ENCODE measurements at regions of chr1 and their contacts with region 1.

Region 1: DNA sequence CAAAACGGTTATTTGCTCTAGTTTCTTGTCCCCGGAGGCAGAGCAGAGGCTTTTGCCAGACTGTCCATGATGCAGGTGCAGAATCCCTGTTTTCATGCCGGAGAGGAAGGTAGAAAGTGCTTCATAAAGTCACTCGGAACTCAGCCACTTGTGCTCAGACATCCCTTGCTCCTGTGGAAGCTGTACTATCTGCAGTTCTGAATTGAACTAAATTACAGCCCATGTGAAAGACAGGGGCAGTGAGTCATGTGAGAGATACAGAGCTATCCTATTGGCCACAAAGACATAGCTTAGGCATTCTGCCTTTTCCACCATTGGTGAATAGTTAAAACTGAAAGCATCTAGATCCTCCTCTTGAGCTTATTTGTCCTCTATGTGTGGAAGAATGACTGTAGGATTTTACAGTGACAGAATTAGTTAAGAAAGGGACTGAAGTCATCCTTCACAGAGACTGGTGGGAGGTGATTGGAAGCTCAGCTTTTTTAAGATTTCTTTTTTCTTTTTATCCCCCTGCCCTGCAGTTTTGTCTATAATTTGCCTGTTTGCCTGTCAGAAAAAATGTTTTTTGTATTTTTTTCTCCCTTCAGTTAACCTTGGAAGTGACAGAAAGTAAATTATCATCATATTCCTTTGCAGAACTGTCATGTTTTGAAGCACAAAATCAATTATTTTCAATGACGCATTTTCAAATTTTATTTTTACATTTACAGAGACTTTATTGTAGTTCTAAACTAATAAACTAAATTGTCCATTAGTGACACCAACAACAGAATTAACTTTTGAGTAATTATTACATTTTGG is 298.6 kb downstream of the PTPRC start:
- DNase-seq: peak; percentile 53 to 81
- ATAC-seq: peak; percentile 77 to 92 (median 87)
- H3K4me3 ChIP-seq: peak overlapping the region; percentile 53
- H3K4me3 Mint-ChIP-seq: no peak overlapping the region
- H3K27ac ChIP-seq: peak overlapping the region; percentile 53
- H3K27ac Mint-ChIP-seq: no peak overlapping the region
- H3K4me1 ChIP-seq: peaks cover 4% of the 10 kb centered on the region
- H3K4me1 Mint-ChIP-seq: peaks cover 12 to 21% of the 10 kb centered on the region in 2 donors
- H3K27me3 ChIP-seq: no peaks in the 10 kb centered on the region
- H3K27me3 Mint-ChIP-seq: no peaks in the 10 kb centered on the region
- CTCF ChIP-seq: no peak

Region 2: GRCh38 chr1:198408716-198409115 is 528.7 kb before region 1 on chr1:
- intact Hi-C with region 1: no loop called
- DNase-seq: no peak
- ATAC-seq: no peak
- H3K4me3 ChIP-seq: no peak overlapping the region
- H3K4me3 Mint-ChIP-seq: no peak overlapping the region
- H3K27ac ChIP-seq: no peak overlapping the region
- H3K27ac Mint-ChIP-seq: no peak overlapping the region
- H3K4me1 ChIP-seq: no peaks in the 10 kb centered on the region
- H3K4me1 Mint-ChIP-seq: no peaks in the 10 kb centered on the region
- H3K27me3 ChIP-seq: no peaks in the 10 kb centered on the region
- H3K27me3 Mint-ChIP-seq: peaks cover 0 to under 1% of the 10 kb centered on the region in 2 donors
- CTCF ChIP-seq: no peak

Region 3: DNA sequence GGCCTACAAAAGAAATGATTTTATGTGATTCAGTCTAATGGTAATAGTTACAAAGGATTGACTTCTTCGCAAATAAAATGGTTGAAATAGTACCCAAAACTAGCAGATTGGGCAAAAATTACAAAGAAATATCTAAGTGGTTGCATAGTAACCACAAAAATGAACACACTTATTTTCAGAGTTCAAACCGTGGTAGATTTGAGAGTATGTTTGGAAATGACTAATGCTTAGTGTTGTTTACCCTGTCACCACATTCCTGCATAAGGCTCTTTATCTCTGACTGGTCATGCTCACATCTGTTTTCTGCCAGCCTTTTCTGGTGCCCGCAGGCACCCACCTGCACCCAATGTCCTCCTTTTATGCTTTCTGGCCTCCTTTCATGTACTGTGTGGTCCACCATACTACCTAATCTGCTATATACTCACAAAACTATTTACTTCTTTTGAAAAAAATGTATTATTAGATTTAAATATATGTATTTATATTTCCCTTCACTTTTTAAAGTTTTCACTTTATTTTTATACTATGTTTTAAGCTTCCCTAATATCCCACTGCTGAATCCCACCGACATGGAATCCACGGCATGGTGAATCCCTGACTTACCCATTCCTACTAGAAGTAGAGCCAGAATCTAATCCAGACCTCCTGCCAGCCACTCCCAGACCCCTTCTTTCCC is 268.3 kb before region 1 on chr1:
- intact Hi-C with region 1: loop called (anchors 10 kb)
- DNase-seq: peak; percentile 55 to 78
- ATAC-seq: peak; percentile 81 to 89 (median 87)
- H3K4me3 ChIP-seq: no peak overlapping the region
- H3K4me3 Mint-ChIP-seq: peak overlapping the region; percentile 70
- H3K27ac ChIP-seq: peak overlapping the region; percentile 86
- H3K27ac Mint-ChIP-seq: peak overlapping the region; percentile 88 to 90
- H3K4me1 ChIP-seq: peaks cover 35% of the 10 kb centered on the region
- H3K4me1 Mint-ChIP-seq: peaks cover 82 to 83% of the 10 kb centered on the region in 2 donors
- H3K27me3 ChIP-seq: no peaks in the 10 kb centered on the region
- H3K27me3 Mint-ChIP-seq: no peaks in the 10 kb centered on the region
- CTCF ChIP-seq: no peak

Region 4: DNA sequence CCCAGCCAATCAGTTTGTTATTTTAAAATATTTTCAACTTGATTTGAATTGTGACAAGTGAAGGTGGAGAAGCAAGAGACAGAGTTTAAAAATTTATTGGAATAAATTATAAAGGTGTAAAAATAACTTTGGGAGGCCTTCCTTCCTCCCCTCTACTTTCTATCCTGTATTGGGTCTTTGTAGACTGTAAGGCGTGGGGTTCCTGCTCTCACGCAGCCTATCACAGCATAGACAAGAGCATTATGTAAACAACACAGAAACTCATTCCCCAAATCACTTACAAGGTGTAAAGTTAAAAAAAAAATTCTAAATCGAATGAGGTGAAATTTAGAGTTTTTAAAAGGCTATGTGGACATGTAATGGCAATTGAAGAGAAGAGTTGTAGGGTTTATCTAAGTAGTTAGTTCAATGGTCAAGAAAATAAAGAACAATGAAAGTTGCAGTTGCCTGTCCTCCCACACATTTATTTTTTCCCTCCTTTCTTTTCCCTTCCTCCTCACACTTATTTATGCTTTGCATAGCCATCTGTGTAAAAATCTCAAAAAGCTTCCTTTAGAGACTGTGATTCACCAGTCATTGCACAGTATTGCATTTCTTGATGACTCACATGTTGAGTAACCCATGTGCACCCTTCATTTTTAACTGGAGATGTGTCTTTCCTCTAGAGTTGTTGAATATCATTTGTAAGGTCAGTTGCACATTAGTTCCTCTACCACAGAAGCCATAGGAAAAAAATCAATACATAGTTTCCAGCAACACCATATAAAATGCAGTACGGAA is 56.4 kb before region 1 on chr1:
- intact Hi-C with region 1: loop called (anchors 10 kb)
- DNase-seq: no peak
- ATAC-seq: peak; percentile 48 to 82 (median 54)
- H3K4me3 ChIP-seq: no peak overlapping the region
- H3K4me3 Mint-ChIP-seq: no peak overlapping the region
- H3K27ac ChIP-seq: no peak overlapping the region
- H3K27ac Mint-ChIP-seq: peak overlapping the region; percentile 34 to 64
- H3K4me1 ChIP-seq: no peaks in the 10 kb centered on the region
- H3K4me1 Mint-ChIP-seq: peaks cover 33 to 44% of the 10 kb centered on the region in 2 donors
- H3K27me3 ChIP-seq: no peaks in the 10 kb centered on the region
- H3K27me3 Mint-ChIP-seq: no peaks in the 10 kb centered on the region
- CTCF ChIP-seq: no peak

Region 5: GRCh38 chr1:198919667-198920398 is 17.6 kb before region 1 on chr1:
- intact Hi-C with region 1: loop called (anchors 1 kb)
- DNase-seq: peak in 1 of 2 donors; percentile 49
- ATAC-seq: peak; percentile 70 to 80 (median 71)
- H3K4me3 ChIP-seq: no peak overlapping the region
- H3K4me3 Mint-ChIP-seq: peak overlapping the region; percentile 85
- H3K27ac ChIP-seq: peak overlapping the region; percentile 66
- H3K27ac Mint-ChIP-seq: peak overlapping the region; percentile 91 to 92
- H3K4me1 ChIP-seq: peaks cover 12% of the 10 kb centered on the region
- H3K4me1 Mint-ChIP-seq: peaks cover 77 to 79% of the 10 kb centered on the region in 2 donors
- H3K27me3 ChIP-seq: no peaks in the 10 kb centered on the region
- H3K27me3 Mint-ChIP-seq: no peaks in the 10 kb centered on the region
- CTCF ChIP-seq: no peak

Region 6: DNA sequence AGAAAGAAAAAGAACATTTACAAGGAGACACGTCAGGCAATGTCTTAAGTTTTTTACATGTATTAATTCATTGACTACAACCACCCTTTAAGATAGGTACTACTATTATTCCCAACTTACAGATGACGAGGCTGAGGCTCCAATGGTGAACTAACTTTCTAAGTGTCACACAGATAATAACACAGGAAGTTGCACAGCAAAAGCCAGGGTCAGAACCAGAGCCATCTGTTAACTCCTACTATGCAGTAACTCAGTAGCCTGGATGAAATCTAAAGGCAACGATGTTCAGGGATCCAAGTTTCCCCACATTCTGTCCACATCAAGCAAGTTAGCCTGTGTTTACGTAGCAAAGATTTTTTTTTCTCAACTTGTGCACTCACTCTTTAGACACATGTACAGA is 73.1 kb after region 1 on chr1:
- intact Hi-C with region 1: loop called (anchors 5 kb)
- DNase-seq: peak in 1 of 2 donors; percentile 51
- ATAC-seq: peak; percentile 90 to 96 (median 96)
- H3K4me3 ChIP-seq: no peak overlapping the region
- H3K4me3 Mint-ChIP-seq: peak overlapping the region; percentile 79
- H3K27ac ChIP-seq: no peak overlapping the region
- H3K27ac Mint-ChIP-seq: peak overlapping the region; percentile 49 to 79
- H3K4me1 ChIP-seq: peaks cover 14% of the 10 kb centered on the region
- H3K4me1 Mint-ChIP-seq: peaks cover 31 to 37% of the 10 kb centered on the region in 2 donors
- H3K27me3 ChIP-seq: peaks cover 4% of the 10 kb centered on the region
- H3K27me3 Mint-ChIP-seq: no peaks in the 10 kb centered on the region
- CTCF ChIP-seq: no peak

Region 7: GRCh38 chr1:199113265-199113869 is 175.9 kb after region 1 on chr1:
- intact Hi-C with region 1: loop called (anchors 2 kb)
- DNase-seq: peak; percentile 52 to 81
- ATAC-seq: peak; percentile 77 to 87 (median 84)
- H3K4me3 ChIP-seq: no peak overlapping the region
- H3K4me3 Mint-ChIP-seq: no peak overlapping the region
- H3K27ac ChIP-seq: no peak overlapping the region
- H3K27ac Mint-ChIP-seq: peak overlapping the region in 1 of 2 donors; percentile 9
- H3K4me1 ChIP-seq: no peaks in the 10 kb centered on the region
- H3K4me1 Mint-ChIP-seq: peaks cover 11 to 18% of the 10 kb centered on the region in 2 donors
- H3K27me3 ChIP-seq: no peaks in the 10 kb centered on the region
- H3K27me3 Mint-ChIP-seq: no peaks in the 10 kb centered on the region
- CTCF ChIP-seq: peak; percentile 95

Region 8: GRCh38 chr1:199243423-199244061 is 306.1 kb after region 1 on chr1:
- intact Hi-C with region 1: loop called (anchors 5 kb)
- DNase-seq: peak; percentile 74 to 82
- ATAC-seq: peak; percentile 96 to 100 (median 100)
- H3K4me3 ChIP-seq: no peak overlapping the region
- H3K4me3 Mint-ChIP-seq: no peak overlapping the region
- H3K27ac ChIP-seq: no peak overlapping the region
- H3K27ac Mint-ChIP-seq: peak overlapping the region in 1 of 2 donors; percentile 65
- H3K4me1 ChIP-seq: peaks cover 9% of the 10 kb centered on the region
- H3K4me1 Mint-ChIP-seq: peaks cover 0 to 20% of the 10 kb centered on the region in 2 donors
- H3K27me3 ChIP-seq: no peaks in the 10 kb centered on the region
- H3K27me3 Mint-ChIP-seq: peaks cover 0 to 9% of the 10 kb centered on the region in 2 donors
- CTCF ChIP-seq: peak; percentile 85

Measured in natural killer cell (primary cell).